RWPE1 (cell line): ENCODE measurements at regions of chr10 and their contacts with region 1.

Region 1: DNA sequence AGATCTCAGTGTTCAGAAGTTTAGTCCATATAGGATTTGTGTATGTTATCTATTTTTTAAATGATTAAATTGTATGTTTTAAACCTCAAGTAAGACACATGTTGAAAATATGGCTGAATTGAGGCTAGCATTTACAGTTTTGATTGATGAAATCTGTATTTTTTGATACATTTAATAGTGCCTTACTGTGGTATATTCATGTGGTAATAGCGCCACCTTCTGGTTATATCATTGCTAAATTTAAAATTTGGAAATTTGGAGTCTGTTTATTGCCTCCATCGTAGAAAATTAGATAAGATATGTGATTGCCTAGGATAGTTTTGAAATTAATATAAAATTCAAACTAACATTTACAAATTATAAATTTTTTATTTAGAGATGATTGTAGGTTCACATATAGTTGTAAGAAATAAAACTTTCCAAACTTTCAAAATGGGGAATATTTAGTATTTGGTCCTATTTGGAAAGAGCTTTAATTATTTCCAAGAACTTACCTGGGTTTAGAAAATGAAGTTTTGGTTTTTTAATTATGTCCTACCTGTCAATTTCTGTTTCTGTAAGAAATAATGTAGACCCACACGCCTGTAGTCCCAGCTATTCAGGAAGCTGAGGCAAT is 19.1 kb upstream of the ARMS2 start:
- DNase-seq: peak; percentile 48
- H3K27ac ChIP-seq: no peak overlapping the region
- CTCF ChIP-seq: peak; percentile 60

Region 2: GRCh38 chr10:122267849-122268737 is 167.2 kb before region 1 on chr10:
- CTCF ChIA-PET with region 1: interaction called, 15 read pairs
- POLR2A ChIA-PET with region 1: no interaction called
- DNase-seq: peak; percentile 78
- H3K27ac ChIP-seq: peak overlapping the region; percentile 24; the same call in 1 of the 2 replicates
- CTCF ChIP-seq: peak; percentile 95

Region 3: DNA sequence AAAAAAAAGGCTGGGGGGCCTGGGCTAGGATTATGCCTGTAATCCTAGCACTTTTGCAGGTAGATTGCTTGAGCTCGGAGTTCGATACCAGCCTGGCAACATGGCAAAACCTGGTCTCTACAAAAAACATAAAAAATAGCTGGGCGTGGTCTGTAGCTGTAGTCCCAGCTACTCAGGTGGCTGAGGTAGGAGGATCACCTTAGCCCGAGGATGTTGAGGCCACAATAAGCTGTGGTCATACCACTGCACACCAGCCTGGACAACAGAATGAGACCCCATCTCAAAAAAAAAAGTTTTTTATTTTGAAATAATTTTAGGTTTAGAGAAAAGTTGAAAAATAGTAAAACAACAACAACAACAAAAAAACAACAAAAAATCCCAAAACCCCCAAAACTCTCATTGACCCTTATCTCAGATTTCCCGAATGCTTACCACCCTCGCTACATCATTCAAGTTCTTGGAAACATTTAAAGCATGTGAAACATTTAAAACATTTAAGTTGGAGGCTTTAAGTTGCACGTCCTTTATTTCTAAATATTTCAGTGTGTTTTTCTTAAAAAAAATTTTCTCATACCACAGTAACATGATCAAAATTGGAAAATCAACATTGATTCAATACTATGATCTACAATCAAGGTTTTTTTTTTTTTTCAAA is 18.6 kb after region 1 on chr10:
- CTCF ChIA-PET with region 1: no interaction called
- POLR2A ChIA-PET with region 1: no interaction called
- DNase-seq: no peak
- H3K27ac ChIP-seq: no peak overlapping the region
- CTCF ChIP-seq: no peak

Region 4: DNA sequence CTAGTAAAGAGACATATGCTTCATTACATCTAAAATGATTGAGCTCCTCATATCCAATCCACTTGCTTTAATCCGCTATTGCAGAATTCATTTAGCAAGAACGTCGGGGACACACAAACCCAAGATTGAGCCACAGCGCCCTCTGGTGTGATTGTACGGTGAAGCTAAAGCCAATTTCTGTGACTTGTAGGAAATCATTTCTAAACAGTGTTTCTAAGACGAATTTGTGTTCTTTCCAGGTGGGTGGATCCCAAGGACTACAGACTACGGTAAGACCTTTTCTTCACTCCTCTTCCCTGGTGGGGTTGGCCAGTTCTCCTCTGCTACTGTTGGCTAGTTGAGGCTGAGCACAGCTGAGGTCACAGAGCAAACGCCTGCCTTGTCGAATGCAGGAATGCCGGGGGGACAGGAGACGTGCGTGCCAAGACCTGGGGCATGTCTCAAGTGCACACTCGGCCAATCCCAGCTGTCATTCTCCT is 130.4 kb after region 1 on chr10:
- CTCF ChIA-PET with region 1: interaction called, 13 read pairs
- POLR2A ChIA-PET with region 1: no interaction called
- DNase-seq: peak; percentile 68
- H3K27ac ChIP-seq: peak overlapping the region; percentile 56; the same call in 1 of the 2 replicates
- CTCF ChIP-seq: peak; percentile 79